Activated naive CD4-positive, alpha-beta T cell treated with anti-CD3 and anti-CD28 coated beads for 36 hours (primary cell): ENCODE measurements at regions of chr1 and their contacts with region 1.

Region 1: GRCh38 chr1:151839457-151840405 is at the start of gene C2CD4D:
- DNase-seq: peak; percentile 83
- H3K4me3 Mint-ChIP-seq: peak within 1 kb of the TSS; percentile 88
- H3K27ac Mint-ChIP-seq: peak within 1 kb of the TSS; percentile 83
- H3K4me1 Mint-ChIP-seq: peaks cover 34% of the 10 kb centered on the region
- H3K27me3 Mint-ChIP-seq: no peaks in the 10 kb centered on the region
- total RNA-seq, gene C2CD4D: 2.3 to 2.7 TPM

Region 2: GRCh38 chr1:151384584-151384983 is 455.1 kb before region 1 on chr1:
- CTCF ChIA-PET with region 1: no interaction called
- intact Hi-C with region 1: no loop called
- DNase-seq: no peak
- H3K4me3 Mint-ChIP-seq: no peak overlapping the region
- H3K27ac Mint-ChIP-seq: no peak overlapping the region
- H3K4me1 Mint-ChIP-seq: no peaks in the 10 kb centered on the region
- H3K27me3 Mint-ChIP-seq: no peaks in the 10 kb centered on the region

Region 3: GRCh38 chr1:151459331-151460046 is 380.2 kb before region 1 on chr1 and contains the start of gene POGZ:
- CTCF ChIA-PET with region 1: no interaction called
- intact Hi-C with region 1: loop called (anchors 5 kb)
- DNase-seq: peak; percentile 97
- H3K4me3 Mint-ChIP-seq: peak within 1 kb of the TSS; percentile 78
- H3K27ac Mint-ChIP-seq: peak within 1 kb of the TSS; percentile 86
- H3K4me1 Mint-ChIP-seq: peaks cover 29% of the 10 kb centered on the region
- H3K27me3 Mint-ChIP-seq: peaks cover 11% of the 10 kb centered on the region
- total RNA-seq, gene POGZ: 69.7 to 73.7 TPM

Region 4: DNA sequence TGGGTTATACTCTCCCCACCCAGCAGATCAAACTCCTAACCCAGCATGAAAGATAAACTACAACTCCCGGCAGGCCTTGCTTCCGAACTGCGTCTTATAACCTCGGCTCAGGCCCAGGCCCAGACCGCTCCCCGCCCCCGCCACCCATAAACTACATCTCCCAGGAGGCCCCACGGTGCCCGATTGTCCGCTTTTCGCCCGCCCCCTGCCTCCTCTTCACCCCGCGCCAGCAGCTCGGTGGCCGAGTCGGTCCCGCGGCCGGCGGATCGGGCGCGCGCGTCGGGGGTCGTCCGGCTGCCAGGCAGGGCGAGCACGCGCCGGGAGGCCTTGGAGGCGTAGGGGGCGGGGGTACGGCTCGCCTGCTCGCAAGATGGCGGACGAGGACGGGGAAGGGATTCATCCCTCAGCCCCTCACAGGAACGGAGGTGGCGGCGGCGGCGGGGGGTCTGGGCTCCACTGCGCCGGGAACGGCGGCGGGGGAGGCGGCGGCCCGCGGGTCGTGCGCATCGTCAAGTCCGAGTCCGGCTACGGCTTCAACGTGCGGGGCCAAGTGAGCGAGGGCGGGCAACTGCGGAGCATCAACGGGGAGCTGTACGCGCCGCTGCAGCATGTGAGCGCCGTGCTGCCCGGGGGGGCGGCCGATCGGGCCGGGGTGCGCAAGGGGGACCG is 227.8 kb before region 1 on chr1 and contains the start of gene SNX27:
- CTCF ChIA-PET with region 1: interaction called, 4 read pairs
- intact Hi-C with region 1: loop called (anchors 2 kb)
- DNase-seq: peak; percentile 94
- H3K4me3 Mint-ChIP-seq: peak within 1 kb of the TSS; percentile 93
- H3K27ac Mint-ChIP-seq: peak within 1 kb of the TSS; percentile 72
- H3K4me1 Mint-ChIP-seq: peaks cover 48% of the 10 kb centered on the region
- H3K27me3 Mint-ChIP-seq: peaks cover 3% of the 10 kb centered on the region
- total RNA-seq, gene SNX27: 22.9 to 23.6 TPM

Region 5: GRCh38 chr1:151739590-151740375 is 99.9 kb before region 1 on chr1:
- CTCF ChIA-PET with region 1: interaction called, 7 read pairs
- intact Hi-C with region 1: loop called (anchors 1 kb)
- DNase-seq: no peak
- H3K4me3 Mint-ChIP-seq: no peak overlapping the region
- H3K27ac Mint-ChIP-seq: no peak overlapping the region
- H3K4me1 Mint-ChIP-seq: no peaks in the 10 kb centered on the region
- H3K27me3 Mint-ChIP-seq: no peaks in the 10 kb centered on the region

Region 6: DNA sequence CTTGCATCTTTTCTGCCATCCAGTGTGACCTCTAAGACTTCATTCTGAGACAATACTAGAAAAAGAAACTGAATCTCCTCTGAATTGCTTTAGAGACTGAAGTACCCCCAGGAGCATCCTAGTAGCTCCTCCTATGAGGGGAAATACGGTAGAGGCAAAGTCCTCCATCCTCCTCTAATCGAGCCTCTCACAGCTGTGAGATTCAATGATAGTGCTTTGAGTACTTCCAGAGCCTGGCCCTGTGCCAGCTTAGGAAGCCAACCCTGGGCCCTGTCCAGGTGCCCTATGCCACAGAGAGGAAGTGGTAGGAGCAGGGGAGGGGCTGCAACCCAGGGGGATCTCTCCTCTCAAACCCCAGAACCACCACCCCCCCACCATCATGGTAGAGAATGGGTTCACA is 18.8 kb before region 1 on chr1:
- CTCF ChIA-PET with region 1: interaction called, 14 read pairs
- intact Hi-C with region 1: no loop called
- DNase-seq: peak; percentile 56
- H3K4me3 Mint-ChIP-seq: no peak overlapping the region
- H3K27ac Mint-ChIP-seq: peak overlapping the region; percentile 78
- H3K4me1 Mint-ChIP-seq: peaks cover 42% of the 10 kb centered on the region
- H3K27me3 Mint-ChIP-seq: no peaks in the 10 kb centered on the region